ENCODE measurements at regions of chr3 and their contacts with region 1.

Region 1: DNA sequence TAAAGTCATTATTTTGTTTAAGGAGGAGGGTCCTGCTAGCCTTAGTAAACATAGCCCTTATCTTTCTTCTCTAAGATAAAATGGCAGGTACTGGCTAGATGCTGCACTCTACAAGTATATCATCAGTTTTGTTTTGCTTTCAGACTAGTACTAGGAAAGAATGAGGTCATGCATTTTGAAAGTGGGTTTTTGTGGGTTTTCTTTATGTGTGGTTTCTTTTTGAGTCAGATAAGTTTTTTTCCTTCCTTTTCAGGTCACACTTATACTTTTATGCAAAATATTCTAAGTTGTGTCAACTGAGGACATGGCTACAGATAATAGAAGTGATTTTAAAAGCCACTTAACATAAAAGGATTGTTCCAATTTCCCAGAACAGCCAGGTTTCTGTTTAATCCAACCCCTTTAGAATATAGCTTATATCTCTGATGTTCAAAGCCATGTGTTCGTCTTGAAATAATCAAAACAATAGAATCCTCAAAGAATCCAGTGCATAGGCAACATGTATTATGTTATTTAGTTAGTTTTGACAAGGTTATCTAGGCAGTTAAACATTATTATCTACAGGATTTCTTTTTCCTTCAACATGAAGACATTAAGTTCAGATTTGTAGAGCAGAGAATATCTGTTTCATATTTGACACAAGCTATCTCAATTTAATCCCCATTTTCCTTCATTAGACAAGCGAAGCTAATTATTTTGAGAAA is 406.2 kb downstream of the RBMS3 start:
- DNase-seq: peak; percentile 5
- H3K4me3 Mint-ChIP-seq: no peak overlapping the region
- H3K27ac Mint-ChIP-seq: peak overlapping the region; percentile 36
- H3K4me1 Mint-ChIP-seq: peaks cover 8% of the 10 kb centered on the region
- H3K27me3 Mint-ChIP-seq: peaks cover 5% of the 10 kb centered on the region

Region 2: GRCh38 chr3:28916713-28917499 is 770.1 kb before region 1 on chr3:
- intact Hi-C with region 1: loop called (anchors 5 kb)
- DNase-seq: peak; percentile 9
- H3K4me3 Mint-ChIP-seq: no peak overlapping the region
- H3K27ac Mint-ChIP-seq: no peak overlapping the region
- H3K4me1 Mint-ChIP-seq: peaks cover 31% of the 10 kb centered on the region
- H3K27me3 Mint-ChIP-seq: peaks cover 10% of the 10 kb centered on the region

Region 3: GRCh38 chr3:29026286-29026685 is 660.8 kb before region 1 on chr3:
- intact Hi-C with region 1: loop called (anchors 1 kb)
- DNase-seq: no peak
- H3K4me3 Mint-ChIP-seq: no peak overlapping the region
- H3K27ac Mint-ChIP-seq: peak overlapping the region; percentile 7
- H3K4me1 Mint-ChIP-seq: peaks cover 10% of the 10 kb centered on the region
- H3K27me3 Mint-ChIP-seq: no peaks in the 10 kb centered on the region

Region 4: DNA sequence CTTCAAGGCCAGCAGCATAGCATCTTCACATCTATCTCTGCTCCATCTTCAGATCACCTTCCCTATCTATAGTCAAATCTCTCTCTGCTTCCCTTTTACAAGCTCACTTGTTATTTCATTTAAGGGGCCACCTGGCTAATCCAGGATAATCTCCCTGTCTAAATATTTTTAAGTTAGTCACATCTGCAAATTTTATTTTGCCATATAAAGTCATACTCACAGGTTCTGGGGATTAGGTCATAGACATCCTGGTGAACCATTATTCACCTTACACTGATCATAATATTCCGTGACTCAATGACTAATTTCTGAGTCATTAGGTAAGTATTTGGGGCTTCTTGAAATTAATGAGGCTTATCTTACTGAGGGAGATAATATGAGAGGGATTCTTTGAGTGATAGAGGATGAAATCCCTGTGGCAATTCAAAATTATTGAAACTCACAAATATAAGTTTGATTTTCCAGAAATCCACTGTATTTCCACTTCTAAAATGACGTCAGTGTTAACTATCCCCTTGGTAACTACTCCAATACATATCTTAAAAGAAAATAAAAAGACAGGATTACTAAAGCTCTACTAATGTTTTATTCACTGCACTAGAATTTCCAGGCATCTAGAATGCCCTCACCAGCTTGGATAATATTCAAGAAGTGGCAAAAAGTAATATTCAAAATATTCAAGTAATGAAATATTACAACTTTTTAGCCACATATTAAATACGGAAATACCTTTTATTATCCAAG is 499.9 kb before region 1 on chr3:
- intact Hi-C with region 1: loop called (anchors 1 kb)
- DNase-seq: no peak
- H3K4me3 Mint-ChIP-seq: no peak overlapping the region
- H3K27ac Mint-ChIP-seq: peak overlapping the region; percentile 8
- H3K4me1 Mint-ChIP-seq: peaks cover 36% of the 10 kb centered on the region
- H3K27me3 Mint-ChIP-seq: no peaks in the 10 kb centered on the region

Region 5: GRCh38 chr3:31472479-31473390 is 1785.7 kb after region 1 on chr3:
- intact Hi-C with region 1: loop called (anchors 5 kb)
- DNase-seq: peak; percentile 17
- H3K4me3 Mint-ChIP-seq: no peak overlapping the region
- H3K27ac Mint-ChIP-seq: peak overlapping the region; percentile 59
- H3K4me1 Mint-ChIP-seq: peaks cover 19% of the 10 kb centered on the region
- H3K27me3 Mint-ChIP-seq: peaks cover 9% of the 10 kb centered on the region

Measured in activated T-helper 1 cell treated with anti-CD3 and anti-CD28 coated beads, Interleukin-12 subunit alpha, Interleukin-12 subunit beta, Interleukin-2, Interleukin-4 antibody, amounts not matched to agents 30 ng/mL and 10 ng/mL and 1 ng/mL, durations not matched to agents 14 hours and 24 hours and 36 hours (primary cell).